CD4-positive, alpha-beta memory T cell (primary cell): ENCODE measurements at regions of chr7 and their contacts with region 1.

Region 1: GRCh38 chr7:150448789-150449147 is 1.7 kb upstream of the GIMAP8 start:
- DNase-seq: peak; percentile 88 to 91 (median 89)
- H3K4me3 ChIP-seq: peak overlapping the region in 1 of 2 donors; percentile 36
- H3K4me3 Mint-ChIP-seq: peak overlapping the region; percentile 78 to 100 (median 100)
- H3K27ac ChIP-seq: peak overlapping the region; percentile 84
- H3K27ac Mint-ChIP-seq: peak overlapping the region; percentile 84 to 98 (median 96)
- H3K4me1 ChIP-seq: peaks cover 51% of the 10 kb centered on the region
- H3K4me1 Mint-ChIP-seq: peaks cover 34 to 64% (median 46%) of the 10 kb centered on the region in 4 donors
- H3K27me3 ChIP-seq: no peaks in the 10 kb centered on the region
- H3K27me3 Mint-ChIP-seq: no peaks in the 10 kb centered on the region

Region 2: GRCh38 chr7:150466477-150466876 is 17.7 kb after region 1 on chr7:
- CTCF ChIA-PET with region 1: interaction called, 6 read pairs
- POLR2A ChIA-PET with region 1: interaction called, 1,079 read pairs
- intact Hi-C with region 1: loop called (anchors 2 kb)
- DNase-seq: no peak
- H3K4me3 ChIP-seq: no peak overlapping the region
- H3K4me3 Mint-ChIP-seq: peak overlapping the region in 6 of 8 donors; percentile 4 to 55 (median 38)
- H3K27ac ChIP-seq: peak overlapping the region; percentile 3
- H3K27ac Mint-ChIP-seq: peak overlapping the region in 5 of 7 donors; percentile 30 to 80 (median 54)
- H3K4me1 ChIP-seq: peaks cover 82% of the 10 kb centered on the region
- H3K4me1 Mint-ChIP-seq: peaks cover 65 to 93% (median 75%) of the 10 kb centered on the region in 4 donors
- H3K27me3 ChIP-seq: no peaks in the 10 kb centered on the region
- H3K27me3 Mint-ChIP-seq: no peaks in the 10 kb centered on the region

Region 3: GRCh38 chr7:150520145-150520544 is 71.4 kb after region 1 on chr7:
- CTCF ChIA-PET with region 1: interaction called, 146 read pairs
- POLR2A ChIA-PET with region 1: interaction called, 1,033 read pairs
- intact Hi-C with region 1: no loop called
- DNase-seq: peak in 1 of 5 donors; percentile 34
- H3K4me3 ChIP-seq: peak overlapping the region; percentile 61 to 74
- H3K4me3 Mint-ChIP-seq: peak overlapping the region; percentile 97 to 100 (median 99)
- H3K27ac ChIP-seq: peak overlapping the region; percentile 62
- H3K27ac Mint-ChIP-seq: peak overlapping the region; percentile 81 to 97 (median 92)
- H3K4me1 ChIP-seq: peaks cover 18% of the 10 kb centered on the region
- H3K4me1 Mint-ChIP-seq: peaks cover 21 to 50% (median 33%) of the 10 kb centered on the region in 4 donors
- H3K27me3 ChIP-seq: no peaks in the 10 kb centered on the region
- H3K27me3 Mint-ChIP-seq: no peaks in the 10 kb centered on the region

Region 4: GRCh38 chr7:150668472-150668911 is 219.7 kb after region 1 on chr7:
- CTCF ChIA-PET with region 1: interaction called, 12 read pairs
- POLR2A ChIA-PET with region 1: interaction called, 50 read pairs
- intact Hi-C with region 1: loop called (anchors 1 kb)
- DNase-seq: peak; percentile 80 to 88 (median 85)
- H3K4me3 ChIP-seq: peak overlapping the region; percentile 2 to 26
- H3K4me3 Mint-ChIP-seq: peak overlapping the region; percentile 55 to 84 (median 72)
- H3K27ac ChIP-seq: peak overlapping the region; percentile 68
- H3K27ac Mint-ChIP-seq: peak overlapping the region; percentile 82 to 99 (median 98)
- H3K4me1 ChIP-seq: peaks cover 92% of the 10 kb centered on the region
- H3K4me1 Mint-ChIP-seq: peaks cover 63 to 95% (median 79%) of the 10 kb centered on the region in 4 donors
- H3K27me3 ChIP-seq: no peaks in the 10 kb centered on the region
- H3K27me3 Mint-ChIP-seq: no peaks in the 10 kb centered on the region

Region 5: GRCh38 chr7:150716368-150716767 is 267.6 kb after region 1 on chr7 and contains the start of gene GIMAP1:
- CTCF ChIA-PET with region 1: interaction called, 9 read pairs
- POLR2A ChIA-PET with region 1: interaction called, 163 read pairs
- intact Hi-C with region 1: loop called (anchors 1 kb)
- DNase-seq: peak; percentile 74 to 80 (median 79)
- H3K4me3 ChIP-seq: peak within 1 kb of the TSS; percentile 74 to 83
- H3K4me3 Mint-ChIP-seq: peak within 1 kb of the TSS; percentile 94 to 100 (median 98)
- H3K27ac ChIP-seq: peak within 1 kb of the TSS; percentile 74
- H3K27ac Mint-ChIP-seq: peak within 1 kb of the TSS; percentile 88 to 98 (median 97)
- H3K4me1 ChIP-seq: peaks cover 56% of the 10 kb centered on the region
- H3K4me1 Mint-ChIP-seq: peaks cover 48 to 79% (median 65%) of the 10 kb centered on the region in 4 donors
- H3K27me3 ChIP-seq: no peaks in the 10 kb centered on the region
- H3K27me3 Mint-ChIP-seq: no peaks in the 10 kb centered on the region
- total RNA-seq, gene GIMAP1: 93.7 to 97.6 TPM

Region 6: GRCh38 chr7:150759479-150759878 is 310.7 kb after region 1 on chr7:
- CTCF ChIA-PET with region 1: interaction called, 93 read pairs
- POLR2A ChIA-PET with region 1: interaction called, 288 read pairs
- intact Hi-C with region 1: loop called (anchors 1 kb)
- DNase-seq: no peak
- H3K4me3 ChIP-seq: no peak overlapping the region
- H3K4me3 Mint-ChIP-seq: no peak overlapping the region
- H3K27ac ChIP-seq: no peak overlapping the region
- H3K27ac Mint-ChIP-seq: no peak overlapping the region
- H3K4me1 ChIP-seq: peaks cover 29% of the 10 kb centered on the region
- H3K4me1 Mint-ChIP-seq: peaks cover 21 to 32% (median 28%) of the 10 kb centered on the region in 4 donors
- H3K27me3 ChIP-seq: no peaks in the 10 kb centered on the region
- H3K27me3 Mint-ChIP-seq: peaks cover 0 to 2% of the 10 kb centered on the region in 2 donors